ENCODE measurements at regions of chr6 and their contacts with region 1.

Region 1: DNA sequence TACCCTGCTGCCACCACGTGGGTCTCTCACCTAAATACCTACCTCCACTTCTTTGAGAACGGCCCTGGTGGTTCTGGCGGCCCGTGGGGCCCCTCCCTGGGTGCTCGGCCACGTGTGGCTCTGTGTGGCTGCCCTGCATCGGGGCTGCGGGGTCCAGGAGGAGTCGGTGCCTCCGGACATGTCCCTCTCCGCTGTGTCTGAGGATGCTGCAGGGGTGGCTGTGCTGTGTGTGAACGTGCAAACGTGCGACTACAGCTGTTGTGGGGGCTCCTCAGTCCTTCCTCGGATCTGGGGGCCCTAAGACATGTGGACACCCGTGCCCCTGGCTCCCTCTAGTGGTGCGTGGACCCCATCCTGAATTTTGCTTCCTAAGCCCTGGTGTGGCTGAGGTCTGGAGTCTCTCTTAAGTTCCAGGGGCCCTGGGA is 691.8 kb downstream of the QKI start:
- DNase-seq: peak in 4 of 5 donors; percentile 74 to 86 (median 80)
- ATAC-seq: peak; percentile 38 to 57 (median 49)
- H3K4me3 ChIP-seq: peak overlapping the region in 10 of 12 donors; percentile 4 to 43 (median 34)
- H3K27ac ChIP-seq: peak overlapping the region; percentile 77 to 97 (median 93)
- H3K4me1 ChIP-seq: peaks cover 0 to 62% (median 38%) of the 10 kb centered on the region in 12 donors
- H3K27me3 ChIP-seq: no peaks in the 10 kb centered on the region
- CTCF ChIP-seq: peak; percentile 32 to 73 (median 62)
- POLR2A ChIP-seq: no peak

Region 2: DNA sequence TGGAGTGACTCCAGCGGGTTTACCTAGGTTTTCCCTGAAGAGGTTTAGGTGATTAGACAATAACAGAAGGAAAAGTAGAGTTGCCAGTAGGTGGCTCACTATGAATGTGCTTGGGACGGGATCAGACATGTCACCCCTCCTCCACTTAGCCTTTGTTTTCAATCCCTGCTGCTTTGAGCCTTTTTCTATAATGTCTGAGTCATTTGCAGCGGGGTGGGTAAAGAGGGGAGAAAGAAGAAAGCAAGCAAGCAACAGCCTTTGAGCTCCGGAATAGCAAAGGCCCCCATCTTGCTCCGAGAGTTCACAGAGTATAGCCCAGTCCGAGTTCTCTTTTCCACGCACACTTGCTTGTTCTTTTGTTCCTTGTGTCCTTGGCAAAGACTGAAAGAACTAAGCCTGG is 1249.5 kb before region 1 on chr6:
- intact Hi-C with region 1: loop called in 1 of 10 experiments (anchors 10 kb)
- DNase-seq: peak in 1 of 5 donors; percentile 40
- ATAC-seq: peak; percentile 74 to 92 (median 88)
- H3K4me3 ChIP-seq: peak overlapping the region in 9 of 12 donors; percentile 10 to 50 (median 35)
- H3K27ac ChIP-seq: peak overlapping the region in 11 of 12 donors; percentile 10 to 75 (median 56)
- H3K4me1 ChIP-seq: peaks cover 0 to 10% (median 0%) of the 10 kb centered on the region in 12 donors
- H3K27me3 ChIP-seq: no peaks in the 10 kb centered on the region
- CTCF ChIP-seq: peak; percentile 33 to 74 (median 56)
- POLR2A ChIP-seq: no peak

Region 3: GRCh38 chr6:163207431-163208383 is 898.6 kb before region 1 on chr6:
- intact Hi-C with region 1: loop called in 1 of 10 experiments (anchors 10 kb)
- DNase-seq: no peak
- ATAC-seq: no peak
- H3K4me3 ChIP-seq: no peak overlapping the region
- H3K27ac ChIP-seq: peak overlapping the region in 6 of 12 donors; percentile 22 to 91 (median 81)
- H3K4me1 ChIP-seq: peaks cover 0 to 7% (median 0%) of the 10 kb centered on the region in 12 donors
- H3K27me3 ChIP-seq: no peaks in the 10 kb centered on the region
- CTCF ChIP-seq: no peak
- POLR2A ChIP-seq: no peak

Region 4: GRCh38 chr6:163413345-163414116 is 692.8 kb before region 1 on chr6:
- intact Hi-C with region 1: loop called in 9 of 10 experiments (anchors 2 to 5 kb)
- DNase-seq: peak; percentile 90 to 95 (median 93)
- ATAC-seq: peak; percentile 71 to 93 (median 90)
- H3K4me3 ChIP-seq: peak overlapping the region; percentile 69 to 93 (median 78)
- H3K27ac ChIP-seq: peak overlapping the region; percentile 95 to 100 (median 99)
- H3K4me1 ChIP-seq: peaks cover 0 to 26% (median 6%) of the 10 kb centered on the region in 12 donors
- H3K27me3 ChIP-seq: no peaks in the 10 kb centered on the region
- CTCF ChIP-seq: no peak
- POLR2A ChIP-seq: peak in 1 of 2 donors; percentile 83

Region 5: DNA sequence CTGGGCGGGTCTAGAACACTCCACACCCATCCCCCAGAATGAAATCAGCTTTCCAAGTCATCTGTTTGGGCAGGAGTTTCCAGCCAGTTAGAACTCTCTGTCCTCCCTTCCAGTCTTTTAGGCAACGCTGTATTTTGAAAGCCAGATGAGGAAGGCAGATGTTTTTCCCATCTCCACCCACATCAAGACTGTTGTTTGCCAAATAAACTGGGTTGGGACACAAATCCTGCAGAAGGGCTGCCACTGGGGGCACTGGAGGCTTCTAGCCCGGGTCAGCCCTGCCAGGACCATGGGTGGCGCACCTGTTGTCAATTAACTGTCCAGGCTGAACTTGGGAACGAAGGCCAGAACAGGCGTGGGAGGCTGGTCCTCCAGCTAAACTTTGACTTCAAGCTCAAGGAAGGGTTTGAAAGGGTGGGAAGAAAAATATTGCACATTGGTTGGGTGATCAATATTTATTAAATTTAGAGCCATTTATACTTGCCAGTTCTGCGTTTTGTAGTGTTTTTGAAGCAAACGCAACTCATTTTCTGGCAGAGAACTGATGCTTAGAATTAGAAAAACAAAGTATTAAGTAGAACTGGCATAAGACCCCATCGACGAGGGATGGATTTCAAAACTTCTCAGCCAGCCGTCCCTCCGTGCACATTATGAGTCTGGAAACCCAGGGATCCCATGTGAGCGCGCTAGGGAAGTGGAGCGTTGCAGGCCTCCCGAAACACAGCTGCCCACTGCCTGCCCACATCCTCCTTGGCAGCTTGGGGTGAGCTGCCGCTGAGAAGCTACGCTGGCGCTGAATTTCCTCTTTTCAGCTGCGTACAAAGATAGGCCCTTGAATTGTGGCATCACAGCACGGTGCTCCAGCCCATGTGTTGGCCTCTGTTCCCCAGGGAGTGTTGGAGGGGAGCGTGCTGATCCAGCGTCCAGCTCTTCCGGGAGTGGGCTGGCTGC is 394.5 kb before region 1 on chr6:
- intact Hi-C with region 1: loop called in 1 of 10 experiments (anchors 10 kb)
- DNase-seq: peak; percentile 80 to 91 (median 84)
- ATAC-seq: peak; percentile 71 to 80 (median 77)
- H3K4me3 ChIP-seq: peak overlapping the region in 1 of 12 donors; percentile 12
- H3K27ac ChIP-seq: peak overlapping the region; percentile 67 to 88 (median 78)
- H3K4me1 ChIP-seq: peaks cover 24 to 63% (median 61%) of the 10 kb centered on the region in 12 donors
- H3K27me3 ChIP-seq: no peaks in the 10 kb centered on the region
- CTCF ChIP-seq: peak in 11 of 12 donors; percentile 20 to 59 (median 41)
- POLR2A ChIP-seq: no peak

Region 6: GRCh38 chr6:163837691-163838431 is 268.5 kb before region 1 on chr6:
- intact Hi-C with region 1: loop called in 5 of 10 experiments (anchors 5 to 10 kb)
- DNase-seq: peak in 4 of 5 donors; percentile 26 to 62 (median 46)
- ATAC-seq: peak; percentile 66 to 88 (median 82)
- H3K4me3 ChIP-seq: peak overlapping the region in 7 of 12 donors; percentile 4 to 39 (median 19)
- H3K27ac ChIP-seq: peak overlapping the region; percentile 6 to 82 (median 60)
- H3K4me1 ChIP-seq: peaks cover 0 to 25% (median 11%) of the 10 kb centered on the region in 12 donors
- H3K27me3 ChIP-seq: no peaks in the 10 kb centered on the region
- CTCF ChIP-seq: no peak
- POLR2A ChIP-seq: no peak

Region 7: GRCh38 chr6:164859816-164860215 is 753.5 kb after region 1 on chr6:
- intact Hi-C with region 1: no loop called
- DNase-seq: no peak
- ATAC-seq: peak in 1 of 4 donors; percentile 60
- H3K4me3 ChIP-seq: no peak overlapping the region
- H3K27ac ChIP-seq: no peak overlapping the region
- H3K4me1 ChIP-seq: no peaks in the 10 kb centered on the region
- H3K27me3 ChIP-seq: no peaks in the 10 kb centered on the region
- CTCF ChIP-seq: no peak
- POLR2A ChIP-seq: no peak

Region 8: DNA sequence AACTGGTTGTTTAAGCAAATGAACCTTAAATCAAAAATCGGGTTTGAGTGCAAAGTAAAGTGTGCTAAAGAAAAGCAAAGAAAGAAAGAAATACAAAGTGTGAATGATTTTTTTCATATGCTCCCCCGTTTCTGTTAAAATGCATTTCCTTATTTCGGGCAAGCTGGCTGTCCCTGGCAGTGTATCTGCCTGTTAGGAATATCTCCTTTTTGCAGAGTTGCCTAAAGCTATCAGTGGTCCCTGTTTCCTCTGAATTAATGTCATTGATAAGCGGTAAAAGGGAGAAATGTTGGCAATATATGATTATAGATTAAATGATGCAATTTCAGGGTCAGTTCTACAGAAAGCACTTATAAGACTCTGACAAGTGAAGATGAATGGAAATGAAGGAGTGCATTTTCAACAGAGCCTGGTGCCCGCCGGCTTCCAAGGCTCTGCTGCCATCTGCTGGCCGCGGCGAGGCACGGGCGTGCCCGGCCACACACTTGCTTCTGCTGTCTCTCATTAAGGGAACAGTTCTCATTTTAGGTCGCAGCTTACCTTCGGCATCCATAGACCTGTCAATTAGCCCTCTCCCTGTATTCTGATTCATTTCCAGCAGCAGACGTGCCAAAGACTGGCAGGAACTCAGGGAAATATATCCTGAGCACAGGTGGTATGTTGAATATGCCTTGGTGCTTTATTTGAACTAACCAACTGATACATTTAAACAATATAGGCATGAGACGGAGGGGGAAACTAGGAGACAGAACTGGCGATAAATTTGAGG is 821.1 kb after region 1 on chr6:
- intact Hi-C with region 1: loop called in 7 of 10 experiments (anchors 1 to 10 kb)
- DNase-seq: peak; percentile 61 to 85 (median 61)
- ATAC-seq: peak; percentile 83 to 96 (median 92)
- H3K4me3 ChIP-seq: peak overlapping the region in 3 of 12 donors; percentile 8 to 28 (median 18)
- H3K27ac ChIP-seq: no peak overlapping the region
- H3K4me1 ChIP-seq: peaks cover 0 to 8% (median 2%) of the 10 kb centered on the region in 12 donors
- H3K27me3 ChIP-seq: no peaks in the 10 kb centered on the region
- CTCF ChIP-seq: peak; percentile 93 to 100 (median 98)
- POLR2A ChIP-seq: no peak

Measured in heart left ventricle (tissue), 16 donors.